ENCODE measurements at regions of chr20 and their contacts with region 1.

Region 1: GRCh38 chr20:35410613-35411012 is 1.2 kb downstream of the UQCC1 start:
- DNase-seq: no peak
- H3K4me3 ChIP-seq: peak overlapping the region; percentile 69 to 99
- H3K27ac ChIP-seq: no peak overlapping the region
- H3K4me1 ChIP-seq: peaks cover 0 to 7% of the 10 kb centered on the region in 2 donors
- H3K27me3 ChIP-seq: no peaks in the 10 kb centered on the region
- CTCF ChIP-seq: no peak

Region 2: DNA sequence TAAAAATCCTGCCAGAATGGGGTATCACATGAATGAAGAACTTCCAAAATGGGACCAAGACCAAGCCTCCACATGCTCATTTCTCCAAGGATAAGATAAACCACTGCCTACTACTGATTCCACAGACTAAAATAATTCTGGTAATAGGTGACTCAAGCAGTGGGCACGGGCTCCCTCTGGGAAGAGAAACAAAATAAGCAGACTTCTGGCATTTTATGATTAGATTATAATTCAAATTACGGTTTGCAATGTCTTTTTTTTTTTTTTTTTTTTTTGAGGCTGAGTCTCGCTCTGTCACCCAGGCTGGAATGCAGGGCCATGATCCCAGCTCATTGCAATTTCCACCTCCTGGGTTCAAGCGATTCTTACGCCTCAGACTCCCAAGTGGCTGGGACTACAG is 14.9 kb before region 1 on chr20:
- intact Hi-C with region 1: no loop called
- DNase-seq: peak; percentile 12 to 76
- H3K4me3 ChIP-seq: no peak overlapping the region
- H3K27ac ChIP-seq: peak overlapping the region; percentile 77 to 79
- H3K4me1 ChIP-seq: peaks cover 7 to 12% of the 10 kb centered on the region in 2 donors
- H3K27me3 ChIP-seq: no peaks in the 10 kb centered on the region
- CTCF ChIP-seq: peak in 1 of 3 experiments; percentile 32

Region 3: GRCh38 chr20:35454881-35455609 is 44.4 kb after region 1 on chr20 and contains the start of gene CEP250:
- intact Hi-C with region 1: loop called (anchors 1 kb)
- DNase-seq: peak; percentile 77 to 97
- H3K4me3 ChIP-seq: peak within 1 kb of the TSS; percentile 75 to 91
- H3K27ac ChIP-seq: peak within 1 kb of the TSS; percentile 87 to 92
- H3K4me1 ChIP-seq: peaks cover 4 to 5% of the 10 kb centered on the region in 2 donors
- H3K27me3 ChIP-seq: no peaks in the 10 kb centered on the region
- CTCF ChIP-seq: no peak
- total RNA-seq, gene CEP250: 17.0 TPM